Psoas muscle (tissue), 8 donors: ENCODE measurements at regions of chr11 and their contacts with region 1.

Region 1: GRCh38 chr11:129230006-129230405 is 37.9 kb upstream of the ARHGAP32 start:
- DNase-seq: no peak
- ATAC-seq: no peak
- H3K4me3 ChIP-seq: no peak overlapping the region
- H3K27ac ChIP-seq: no peak overlapping the region
- H3K4me1 ChIP-seq: no peaks in the 10 kb centered on the region
- H3K27me3 ChIP-seq: no peaks in the 10 kb centered on the region
- CTCF ChIP-seq: no peak

Region 2: DNA sequence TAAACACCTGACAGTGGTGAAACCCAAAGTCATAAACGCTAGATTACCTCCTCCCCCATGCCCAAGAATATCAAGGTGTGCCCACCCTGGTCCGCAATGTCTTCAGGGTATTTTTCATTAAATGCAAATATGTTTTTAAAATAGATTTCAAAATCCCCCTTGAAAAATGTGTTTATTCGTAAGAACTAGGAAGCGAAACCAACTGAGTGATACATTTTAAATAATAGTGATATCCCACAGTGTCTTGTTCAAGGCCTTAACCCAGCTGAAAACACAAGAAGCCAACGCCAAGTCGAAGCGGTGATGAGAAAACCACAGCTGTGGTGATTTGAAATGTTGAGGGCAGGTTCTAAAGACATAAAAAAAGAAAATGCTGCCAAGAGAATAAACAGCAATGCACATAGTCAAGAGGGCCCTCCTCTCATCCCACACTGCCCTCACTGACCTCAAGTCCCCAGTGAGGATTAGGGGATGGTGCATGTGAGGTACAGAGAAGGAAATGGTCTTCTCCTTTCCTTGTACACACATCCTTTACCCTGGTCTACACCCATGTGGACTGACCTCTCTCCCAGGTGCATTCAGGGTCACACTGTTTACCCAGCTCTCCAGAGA is 388.4 kb before region 1 on chr11:
- intact Hi-C with region 1: no loop called
- DNase-seq: no peak
- ATAC-seq: no peak
- H3K4me3 ChIP-seq: no peak overlapping the region
- H3K27ac ChIP-seq: no peak overlapping the region
- H3K4me1 ChIP-seq: no peaks in the 10 kb centered on the region
- H3K27me3 ChIP-seq: peaks cover 0 to 5% (median 2%) of the 10 kb centered on the region in 3 donors
- CTCF ChIP-seq: no peak

Region 3: DNA sequence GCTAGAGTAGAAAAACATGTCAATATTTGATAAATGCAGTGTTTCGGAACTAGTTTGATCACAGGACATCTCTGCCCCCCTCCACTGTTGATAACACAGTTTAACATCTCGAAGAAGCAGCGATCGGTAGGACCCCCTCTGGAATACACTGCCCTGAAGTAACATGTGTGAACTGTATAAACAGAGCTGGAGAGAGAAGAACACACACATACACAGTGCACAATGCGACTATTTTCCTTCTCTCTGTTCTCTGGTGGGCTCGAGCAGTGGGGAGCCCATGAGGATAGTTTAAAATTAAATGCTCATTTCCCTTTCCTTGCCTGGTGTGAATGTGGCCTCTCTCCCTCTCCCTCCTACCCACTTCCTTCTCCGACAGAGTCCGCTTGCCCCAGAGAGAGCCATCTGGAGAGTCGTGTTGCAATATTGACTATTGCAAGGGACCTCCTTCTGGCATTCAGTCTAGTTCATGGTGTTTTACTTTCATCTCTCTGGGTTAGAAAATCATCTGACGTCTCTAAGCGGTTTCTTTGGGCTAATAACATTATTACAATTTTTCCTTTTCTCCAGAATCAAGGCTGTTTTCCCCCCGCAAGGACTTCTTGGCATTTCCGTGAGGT is 94.0 kb after region 1 on chr11:
- intact Hi-C with region 1: loop called in 1 of 2 experiments (anchors 10 kb)
- DNase-seq: no peak
- ATAC-seq: peak in 3 of 4 donors; percentile 71 to 85 (median 72)
- H3K4me3 ChIP-seq: no peak overlapping the region
- H3K27ac ChIP-seq: no peak overlapping the region
- H3K4me1 ChIP-seq: no peaks in the 10 kb centered on the region
- H3K27me3 ChIP-seq: no peaks in the 10 kb centered on the region
- CTCF ChIP-seq: no peak

Region 4: GRCh38 chr11:129331871-129332274 is 101.9 kb after region 1 on chr11:
- intact Hi-C with region 1: loop called (anchors 5 to 10 kb)
- DNase-seq: peak; percentile 77 to 84
- ATAC-seq: peak; percentile 81 to 95 (median 94)
- H3K4me3 ChIP-seq: no peak overlapping the region
- H3K27ac ChIP-seq: no peak overlapping the region
- H3K4me1 ChIP-seq: no peaks in the 10 kb centered on the region
- H3K27me3 ChIP-seq: no peaks in the 10 kb centered on the region
- CTCF ChIP-seq: peak; percentile 85